Psoas muscle (tissue), 8 donors: ENCODE measurements at regions of chrX and their contacts with region 1.

Region 1: DNA sequence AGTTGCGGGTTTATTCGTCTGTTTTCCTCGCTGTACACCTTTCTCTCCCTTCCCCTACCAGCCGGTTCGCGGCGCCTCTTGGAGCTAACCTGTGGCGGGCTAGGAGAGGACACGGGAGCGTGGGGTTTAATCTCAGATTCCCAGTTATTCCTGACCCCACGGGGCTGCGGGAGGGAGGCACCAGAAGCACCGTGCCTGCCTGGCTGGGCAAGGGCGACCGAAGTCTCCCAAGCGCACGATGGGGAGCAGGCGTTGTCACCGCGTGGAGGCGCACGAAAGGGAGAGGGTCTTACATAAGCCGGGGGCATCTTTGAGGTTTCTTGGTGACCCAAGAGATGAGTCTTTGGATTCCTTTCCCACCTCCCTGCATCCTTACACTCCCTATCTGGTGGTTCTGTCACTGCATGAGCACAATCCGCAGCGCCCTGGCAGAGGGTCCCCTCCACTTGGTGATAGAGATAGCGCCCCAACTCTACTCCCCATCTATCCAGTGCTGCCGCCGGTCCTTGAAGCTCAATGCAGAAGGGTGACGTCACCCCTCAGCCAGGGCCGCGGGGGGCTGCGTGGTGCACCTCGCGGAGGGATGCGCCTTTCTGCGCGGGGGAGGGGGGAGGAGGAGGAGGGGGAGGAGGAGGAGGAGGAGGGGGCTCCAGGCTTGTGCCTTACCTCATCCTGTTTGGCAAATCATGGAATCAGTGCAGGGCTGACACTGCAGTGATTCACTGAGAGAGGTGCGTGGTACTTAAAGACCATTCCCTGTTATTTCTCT is 793 bp downstream of the TSPAN7 start:
- DNase-seq: peak; percentile 29 to 62
- ATAC-seq: peak; percentile 44 to 64 (median 52)
- H3K4me3 ChIP-seq: peak overlapping the region; percentile 73
- H3K27ac ChIP-seq: peak overlapping the region; percentile 86
- H3K4me1 ChIP-seq: no peaks in the 10 kb centered on the region
- H3K27me3 ChIP-seq: peaks cover 0 to 3% (median 0%) of the 10 kb centered on the region in 3 donors
- CTCF ChIP-seq: no peak

Region 2: GRCh38 chrX:38513112-38513742 is 48.9 kb before region 1 on chrX:
- intact Hi-C with region 1: loop called in 1 of 2 experiments (anchors 2 kb)
- DNase-seq: peak in 1 of 2 donors; percentile 10
- ATAC-seq: peak; percentile 86 to 94 (median 89)
- H3K4me3 ChIP-seq: no peak overlapping the region
- H3K27ac ChIP-seq: peak overlapping the region; percentile 78
- H3K4me1 ChIP-seq: no peaks in the 10 kb centered on the region
- H3K27me3 ChIP-seq: peaks cover 0 to 6% (median 0%) of the 10 kb centered on the region in 3 donors
- CTCF ChIP-seq: no peak

Region 3: GRCh38 chrX:38654302-38654701 is 92.2 kb after region 1 on chrX:
- intact Hi-C with region 1: loop called in 1 of 2 experiments (anchors 2 kb)
- DNase-seq: no peak
- ATAC-seq: peak in 1 of 4 donors; percentile 51
- H3K4me3 ChIP-seq: no peak overlapping the region
- H3K27ac ChIP-seq: no peak overlapping the region
- H3K4me1 ChIP-seq: peaks cover 8% of the 10 kb centered on the region
- H3K27me3 ChIP-seq: no peaks in the 10 kb centered on the region
- CTCF ChIP-seq: peak; percentile 50